ENCODE measurements at regions of chr5 and their contacts with region 1.

Region 1: GRCh38 chr5:90191352-90192045 is 218.1 kb downstream of the CETN3 start:
- DNase-seq: peak; percentile 24
- H3K4me3 ChIP-seq: no peak overlapping the region
- H3K27ac ChIP-seq: no peak overlapping the region
- H3K4me1 ChIP-seq: peaks cover 0 to 6% (median 0%) of the 10 kb centered on the region in 4 donors
- H3K27me3 ChIP-seq: no peaks in the 10 kb centered on the region
- CTCF ChIP-seq: no peak
- EP300 ChIP-seq: no peak
- POLR2A ChIP-seq: no peak

Region 2: GRCh38 chr5:88724201-88724600 is 1467.3 kb before region 1 on chr5:
- in situ Hi-C with region 1: loop called in 1 of 4 experiments (anchors 25 kb)
- intact Hi-C with region 1: no loop called
- DNase-seq: no peak
- H3K4me3 ChIP-seq: no peak overlapping the region
- H3K27ac ChIP-seq: no peak overlapping the region
- H3K4me1 ChIP-seq: peaks cover 0 to 7% (median 0%) of the 10 kb centered on the region in 4 donors
- H3K27me3 ChIP-seq: no peaks in the 10 kb centered on the region
- CTCF ChIP-seq: no peak
- EP300 ChIP-seq: no peak
- POLR2A ChIP-seq: no peak

Region 3: GRCh38 chr5:91417219-91417618 is 1225.7 kb after region 1 on chr5:
- in situ Hi-C with region 1: no loop called
- intact Hi-C with region 1: no loop called
- DNase-seq: no peak
- H3K4me3 ChIP-seq: no peak overlapping the region
- H3K27ac ChIP-seq: no peak overlapping the region
- H3K4me1 ChIP-seq: peaks cover 0 to 10% (median 1%) of the 10 kb centered on the region in 4 donors
- H3K27me3 ChIP-seq: no peaks in the 10 kb centered on the region
- CTCF ChIP-seq: no peak
- EP300 ChIP-seq: no peak
- POLR2A ChIP-seq: no peak